ENCODE measurements at regions of chr1 and their contacts with region 1.

Region 1: DNA sequence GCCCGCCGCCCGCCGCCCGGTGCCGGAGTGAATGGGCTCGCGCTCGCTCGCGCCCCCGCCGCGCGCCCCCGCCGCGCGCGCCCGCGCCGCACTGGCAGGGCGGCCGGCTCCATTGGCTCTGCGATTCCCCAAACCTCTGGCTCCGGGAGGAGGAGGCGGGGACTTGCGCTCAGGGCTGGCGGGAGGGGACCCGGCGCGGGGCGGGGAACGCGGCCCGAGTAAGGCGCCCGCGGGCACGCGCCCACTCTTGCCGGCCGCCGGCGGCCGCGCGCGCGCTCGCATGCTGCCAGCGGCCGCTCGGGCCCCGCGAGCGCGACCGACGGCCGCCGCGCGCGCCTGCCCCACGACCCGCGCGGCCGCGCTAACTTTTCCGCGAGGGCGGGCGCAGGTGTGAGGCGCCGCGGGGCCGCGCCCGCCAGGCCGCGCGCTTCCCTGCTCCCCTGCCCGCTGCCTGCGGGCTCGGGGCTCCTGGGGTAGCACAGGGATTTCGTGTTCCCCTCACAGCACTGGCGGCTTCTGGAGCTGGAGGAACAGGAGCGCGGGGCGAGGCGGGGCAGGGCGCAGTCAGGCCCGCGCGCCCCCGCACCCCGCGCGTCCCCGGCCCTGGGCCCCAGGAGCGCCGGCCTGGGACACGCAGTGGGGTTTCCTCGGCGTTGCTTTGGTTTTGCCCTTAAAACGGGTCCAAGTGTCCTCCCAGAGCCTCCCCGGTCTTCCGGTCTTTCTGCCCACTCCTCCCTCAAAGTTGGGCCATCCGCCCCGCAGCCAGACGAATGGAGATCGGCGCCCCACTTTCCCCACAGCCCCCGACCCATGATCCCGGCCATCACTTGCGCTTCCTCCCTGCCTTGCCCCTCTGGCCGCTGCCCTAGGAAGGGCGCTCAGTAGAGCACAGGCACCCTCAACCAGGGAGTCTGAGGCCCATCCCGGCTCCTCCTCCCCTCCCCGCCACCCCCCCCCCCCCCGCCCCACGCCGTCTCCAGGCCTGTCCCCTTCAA is 101.5 kb downstream of the CASZ1 start:
- DNase-seq: peak; percentile 83
- ATAC-seq: peak; percentile 55
- H3K4me3 Mint-ChIP-seq: peak overlapping the region; percentile 57
- H3K27ac Mint-ChIP-seq: no peak overlapping the region
- H3K4me1 Mint-ChIP-seq: peaks cover 36% of the 10 kb centered on the region
- H3K27me3 Mint-ChIP-seq: peaks cover 2% of the 10 kb centered on the region

Region 2: DNA sequence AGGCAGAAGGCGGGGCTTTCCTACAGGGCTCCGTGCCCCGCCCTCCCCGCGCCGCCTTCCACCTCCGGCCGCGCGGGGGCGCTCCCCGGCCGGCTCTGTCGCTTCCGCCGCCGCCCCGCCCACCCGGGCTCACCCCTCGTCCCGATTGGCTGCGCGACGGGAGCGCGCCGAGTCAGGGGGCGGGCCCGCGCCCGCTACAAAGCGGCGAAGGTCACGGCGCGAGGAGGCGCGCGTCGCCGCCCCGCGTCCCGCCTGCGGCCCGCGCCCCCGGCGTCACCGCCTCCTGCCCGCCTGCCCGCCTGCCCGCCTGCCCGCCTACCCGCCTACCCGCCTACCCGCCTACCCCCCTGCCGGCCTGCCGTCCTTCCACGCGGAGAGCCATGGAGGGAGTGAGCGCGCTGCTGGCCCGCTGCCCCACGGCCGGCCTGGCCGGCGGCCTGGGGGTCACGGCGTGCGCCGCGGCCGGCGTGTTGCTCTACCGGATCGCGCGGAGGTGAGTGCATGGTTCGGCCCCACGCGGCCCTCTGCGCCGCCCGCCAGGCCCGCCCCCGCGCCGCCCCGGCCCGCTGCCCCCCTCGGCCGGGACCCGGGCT is 1106.3 kb before region 1 on chr1 and contains the start of gene TMEM201:
- CTCF ChIA-PET with region 1: no interaction called
- POLR2A ChIA-PET with region 1: no interaction called
- intact Hi-C with region 1: loop called in 1 of 2 experiments (anchors 10 kb)
- DNase-seq: peak; percentile 97
- ATAC-seq: peak; percentile 92
- H3K4me3 Mint-ChIP-seq: peak within 1 kb of the TSS; percentile 80
- H3K27ac Mint-ChIP-seq: peak within 1 kb of the TSS; percentile 79
- H3K4me1 Mint-ChIP-seq: peaks cover 26% of the 10 kb centered on the region
- H3K27me3 Mint-ChIP-seq: no peaks in the 10 kb centered on the region
- total RNA-seq, gene TMEM201: 14.6 to 15.1 TPM

Region 3: GRCh38 chr1:10209905-10210810 is 484.8 kb before region 1 on chr1 and contains the start of gene KIF1B:
- CTCF ChIA-PET with region 1: no interaction called
- POLR2A ChIA-PET with region 1: no interaction called
- intact Hi-C with region 1: loop called in 1 of 2 experiments (anchors 5 kb)
- DNase-seq: peak; percentile 97
- ATAC-seq: peak; percentile 98
- H3K4me3 Mint-ChIP-seq: peak within 1 kb of the TSS; percentile 76
- H3K27ac Mint-ChIP-seq: peak within 1 kb of the TSS; percentile 74
- H3K4me1 Mint-ChIP-seq: peaks cover 31% of the 10 kb centered on the region
- H3K27me3 Mint-ChIP-seq: no peaks in the 10 kb centered on the region
- total RNA-seq, gene KIF1B: 12.3 to 13.5 TPM

Region 4: GRCh38 chr1:10494754-10495474 is 200.0 kb before region 1 on chr1:
- CTCF ChIA-PET with region 1: no interaction called
- POLR2A ChIA-PET with region 1: no interaction called
- intact Hi-C with region 1: loop called (anchors 1 to 5 kb)
- DNase-seq: peak; percentile 90
- ATAC-seq: peak; percentile 87
- H3K4me3 Mint-ChIP-seq: peak overlapping the region; percentile 72
- H3K27ac Mint-ChIP-seq: peak overlapping the region; percentile 91
- H3K4me1 Mint-ChIP-seq: peaks cover 49% of the 10 kb centered on the region
- H3K27me3 Mint-ChIP-seq: no peaks in the 10 kb centered on the region

Region 5: GRCh38 chr1:10796019-10796944 is 101.4 kb after region 1 on chr1 and contains the start of gene CASZ1:
- CTCF ChIA-PET with region 1: interaction called, 4 read pairs
- POLR2A ChIA-PET with region 1: no interaction called
- intact Hi-C with region 1: loop called in 1 of 2 experiments (anchors 5 kb)
- DNase-seq: peak; percentile 24
- ATAC-seq: no peak
- H3K4me3 Mint-ChIP-seq: peak within 1 kb of the TSS; percentile 44
- H3K27ac Mint-ChIP-seq: no peak within 1 kb of the TSS
- H3K4me1 Mint-ChIP-seq: peaks cover 11% of the 10 kb centered on the region
- H3K27me3 Mint-ChIP-seq: peaks cover 52% of the 10 kb centered on the region
- total RNA-seq, gene CASZ1: 3.7 to 4.0 TPM

Region 6: DNA sequence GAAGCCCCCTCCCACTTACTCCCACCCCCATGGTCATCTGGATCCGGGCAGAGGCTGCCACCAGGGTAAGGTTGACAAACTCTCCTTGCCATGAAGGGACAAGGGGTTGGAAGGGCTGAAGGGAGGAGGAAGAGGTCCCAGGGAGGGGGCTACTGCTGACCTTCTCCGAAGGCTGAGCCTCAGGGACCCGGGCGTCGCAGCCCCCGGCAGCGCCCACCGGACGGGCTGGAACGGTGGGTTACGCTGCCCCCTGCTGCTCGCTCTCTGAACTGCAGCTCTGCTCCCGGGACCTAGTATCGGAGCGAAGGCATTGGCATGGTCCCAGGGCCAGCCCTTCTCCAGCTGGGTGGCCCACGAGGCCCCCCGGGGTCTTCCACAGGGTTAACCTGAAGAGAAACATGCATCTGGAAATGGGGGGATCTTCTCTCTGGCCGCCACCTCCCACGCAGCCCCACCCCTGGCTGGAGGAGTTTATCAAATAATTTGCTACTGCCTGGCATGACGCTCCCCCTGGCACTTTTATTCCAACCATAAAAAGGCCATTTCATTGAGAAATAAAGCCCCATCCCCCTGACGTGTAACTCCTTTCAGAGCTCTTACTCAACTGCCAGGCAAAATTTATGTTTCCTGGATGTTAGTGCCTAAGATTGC is 247.1 kb after region 1 on chr1:
- CTCF ChIA-PET with region 1: no interaction called
- POLR2A ChIA-PET with region 1: no interaction called
- intact Hi-C with region 1: loop called (anchors 1 to 5 kb)
- DNase-seq: peak; percentile 77
- ATAC-seq: no peak
- H3K4me3 Mint-ChIP-seq: no peak overlapping the region
- H3K27ac Mint-ChIP-seq: no peak overlapping the region
- H3K4me1 Mint-ChIP-seq: peaks cover 34% of the 10 kb centered on the region
- H3K27me3 Mint-ChIP-seq: peaks cover 53% of the 10 kb centered on the region

Measured in activated CD4-positive, alpha-beta T cell treated with anti-CD3 and anti-CD28 coated beads for 36 hours (primary cell).